Heart right ventricle (tissue), 16 donors: ENCODE measurements at regions of chr5 and their contacts with region 1.

Region 1: GRCh38 chr5:16544607-16545374 is 72.0 kb downstream of the RETREG1 start:
- DNase-seq: no peak
- ATAC-seq: peak in 7 of 8 donors; percentile 55 to 87 (median 69)
- H3K4me3 ChIP-seq: no peak overlapping the region
- H3K27ac ChIP-seq: peak overlapping the region in 9 of 10 donors; percentile 25 to 86 (median 67)
- H3K4me1 ChIP-seq: peaks cover 0 to 63% (median 15%) of the 10 kb centered on the region in 9 donors
- H3K27me3 ChIP-seq: no peaks in the 10 kb centered on the region
- CTCF ChIP-seq: no peak

Region 2: GRCh38 chr5:16497546-16497945 is 47.2 kb before region 1 on chr5:
- intact Hi-C with region 1: loop called in 1 of 10 experiments (anchors 5 kb)
- DNase-seq: no peak
- ATAC-seq: no peak
- H3K4me3 ChIP-seq: no peak overlapping the region
- H3K27ac ChIP-seq: peak overlapping the region in 8 of 10 donors; percentile 26 to 68 (median 56)
- H3K4me1 ChIP-seq: peaks cover 0 to 81% (median 26%) of the 10 kb centered on the region in 9 donors
- H3K27me3 ChIP-seq: no peaks in the 10 kb centered on the region
- CTCF ChIP-seq: no peak

Region 3: GRCh38 chr5:16508730-16509531 is 35.9 kb before region 1 on chr5:
- intact Hi-C with region 1: loop called in 3 of 10 experiments (anchors 2 to 5 kb)
- DNase-seq: peak; percentile 74 to 75
- ATAC-seq: peak; percentile 84 to 95 (median 94)
- H3K4me3 ChIP-seq: peak overlapping the region; percentile 4 to 60 (median 48)
- H3K27ac ChIP-seq: peak overlapping the region; percentile 57 to 96 (median 88)
- H3K4me1 ChIP-seq: peaks cover 0 to 25% (median 7%) of the 10 kb centered on the region in 9 donors
- H3K27me3 ChIP-seq: no peaks in the 10 kb centered on the region
- CTCF ChIP-seq: no peak

Region 4: GRCh38 chr5:17497446-17497845 is 952.7 kb after region 1 on chr5:
- intact Hi-C with region 1: no loop called
- DNase-seq: no peak
- ATAC-seq: no peak
- H3K4me3 ChIP-seq: no peak overlapping the region
- H3K27ac ChIP-seq: no peak overlapping the region
- H3K4me1 ChIP-seq: no peaks in the 10 kb centered on the region
- H3K27me3 ChIP-seq: no peaks in the 10 kb centered on the region
- CTCF ChIP-seq: no peak